ENCODE measurements at regions of chr12 and their contacts with region 1.

Region 1: GRCh38 chr12:92928962-92929915 is at the start of gene EEA1:
- DNase-seq: peak; percentile 94 to 98 (median 98)
- H3K4me3 ChIP-seq: peak within 1 kb of the TSS; percentile 70 to 91 (median 80)
- H3K27ac ChIP-seq: peak within 1 kb of the TSS; percentile 74 to 93
- H3K4me1 ChIP-seq: peaks cover 11 to 32% (median 25%) of the 10 kb centered on the region in 4 experiments
- H3K27me3 ChIP-seq: no peaks in the 10 kb centered on the region

Region 2: DNA sequence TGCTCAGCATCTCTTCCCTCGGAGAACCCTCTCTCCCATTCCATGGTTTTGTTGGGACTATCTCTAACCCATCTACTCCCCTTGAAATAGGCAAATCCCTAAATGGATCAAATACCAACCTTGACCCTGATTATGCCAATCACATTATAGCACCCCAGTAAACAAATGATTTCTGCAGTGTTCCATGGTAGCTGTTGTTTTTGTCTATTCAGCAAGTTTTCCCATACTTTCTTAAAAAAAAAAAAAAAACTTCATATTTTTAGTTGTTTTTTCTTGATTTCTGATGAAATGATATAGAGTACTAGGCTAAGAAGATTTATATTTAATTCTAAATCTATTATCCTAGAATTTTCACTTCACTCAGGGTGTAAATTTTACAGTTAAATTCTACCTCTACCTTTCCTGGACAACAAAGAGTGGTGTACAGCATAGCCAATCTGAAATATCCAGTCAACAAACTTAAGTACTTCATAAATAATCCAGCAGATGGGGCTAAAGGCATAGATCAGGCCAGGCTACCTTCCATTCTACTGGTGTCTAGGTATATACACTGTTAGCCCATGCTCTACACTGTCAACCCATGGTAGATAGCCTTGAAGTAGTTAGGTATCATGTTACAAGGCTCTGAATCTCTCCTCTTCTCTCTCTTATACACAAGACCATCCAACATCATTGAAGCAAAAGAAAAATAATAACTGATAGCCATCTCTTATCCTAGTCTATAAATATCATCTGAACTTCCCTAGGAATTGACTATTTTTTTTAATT is 144.3 kb before region 1 on chr12:
- CTCF ChIA-PET with region 1: interaction called, 14 read pairs
- POLR2A ChIA-PET with region 1: no interaction called
- DNase-seq: peak; percentile 71 to 86 (median 85)
- H3K4me3 ChIP-seq: no peak overlapping the region
- H3K27ac ChIP-seq: no peak overlapping the region
- H3K4me1 ChIP-seq: peaks cover 0 to 8% (median 0%) of the 10 kb centered on the region in 4 experiments
- H3K27me3 ChIP-seq: no peaks in the 10 kb centered on the region

Region 3: DNA sequence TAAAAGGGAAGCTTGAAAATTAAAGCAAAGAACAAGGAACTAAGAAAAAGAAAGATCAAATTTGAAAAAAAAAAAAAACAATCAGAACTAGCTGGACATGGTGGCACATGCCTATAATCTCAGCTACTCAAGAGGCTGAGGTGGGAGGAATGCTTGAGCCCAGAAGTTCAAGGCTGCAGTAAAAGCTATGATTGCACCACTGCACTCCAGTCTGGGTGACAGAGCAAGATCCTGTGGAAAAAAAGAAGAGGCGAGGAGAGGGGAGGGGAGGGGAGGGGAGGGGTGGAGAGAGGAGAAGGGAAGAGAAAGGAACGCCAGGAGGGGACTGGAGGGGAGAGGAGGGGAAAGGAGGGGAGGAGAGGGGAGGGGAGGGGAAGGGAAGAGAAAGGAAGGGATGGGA is 43.1 kb before region 1 on chr12:
- CTCF ChIA-PET with region 1: no interaction called
- POLR2A ChIA-PET with region 1: no interaction called
- DNase-seq: no peak
- H3K4me3 ChIP-seq: no peak overlapping the region
- H3K27ac ChIP-seq: no peak overlapping the region
- H3K4me1 ChIP-seq: no peaks in the 10 kb centered on the region
- H3K27me3 ChIP-seq: no peaks in the 10 kb centered on the region